ENCODE measurements at regions of chr14 and their contacts with region 1.

Region 1: GRCh38 chr14:21097636-21098075 is 799 bp downstream of the ZNF219 start:
- DNase-seq: peak; percentile 34
- H3K4me3 Mint-ChIP-seq: peak overlapping the region; percentile 66
- H3K27ac Mint-ChIP-seq: no peak overlapping the region
- H3K4me1 Mint-ChIP-seq: peaks cover 27% of the 10 kb centered on the region
- H3K27me3 Mint-ChIP-seq: peaks cover 70% of the 10 kb centered on the region

Region 2: GRCh38 chr14:21071225-21072030 is 26.2 kb before region 1 on chr14:
- CTCF ChIA-PET with region 1: interaction called, 69 read pairs
- DNase-seq: peak; percentile 62
- H3K4me3 Mint-ChIP-seq: peak overlapping the region; percentile 42
- H3K27ac Mint-ChIP-seq: no peak overlapping the region
- H3K4me1 Mint-ChIP-seq: peaks cover 34% of the 10 kb centered on the region
- H3K27me3 Mint-ChIP-seq: peaks cover 93% of the 10 kb centered on the region

Measured in activated naive CD4-positive, alpha-beta T cell treated with anti-CD3 and anti-CD28 coated beads, Interleukin-2, amount 10 ng/mL, durations not matched to agents 7 days and 5 days (primary cell).